Activated naive CD4-positive, alpha-beta T cell treated with anti-CD3 and anti-CD28 coated beads, Interleukin-2, amount 10 ng/mL, durations not matched to agents 7 days and 5 days (primary cell): ENCODE measurements at regions of chr6 and their contacts with region 1.

Region 1: GRCh38 chr6:42547407-42548329 is 16.2 kb upstream of the UBR2 start:
- DNase-seq: peak; percentile 89
- H3K4me3 Mint-ChIP-seq: peak overlapping the region; percentile 51
- H3K27ac Mint-ChIP-seq: peak overlapping the region; percentile 42
- H3K4me1 Mint-ChIP-seq: peaks cover 15% of the 10 kb centered on the region
- H3K27me3 Mint-ChIP-seq: peaks cover 8% of the 10 kb centered on the region

Region 2: GRCh38 chr6:42260972-42261371 is 286.7 kb before region 1 on chr6:
- CTCF ChIA-PET with region 1: interaction called, 64 read pairs
- DNase-seq: peak; percentile 51
- H3K4me3 Mint-ChIP-seq: no peak overlapping the region
- H3K27ac Mint-ChIP-seq: no peak overlapping the region
- H3K4me1 Mint-ChIP-seq: no peaks in the 10 kb centered on the region
- H3K27me3 Mint-ChIP-seq: no peaks in the 10 kb centered on the region

Region 3: DNA sequence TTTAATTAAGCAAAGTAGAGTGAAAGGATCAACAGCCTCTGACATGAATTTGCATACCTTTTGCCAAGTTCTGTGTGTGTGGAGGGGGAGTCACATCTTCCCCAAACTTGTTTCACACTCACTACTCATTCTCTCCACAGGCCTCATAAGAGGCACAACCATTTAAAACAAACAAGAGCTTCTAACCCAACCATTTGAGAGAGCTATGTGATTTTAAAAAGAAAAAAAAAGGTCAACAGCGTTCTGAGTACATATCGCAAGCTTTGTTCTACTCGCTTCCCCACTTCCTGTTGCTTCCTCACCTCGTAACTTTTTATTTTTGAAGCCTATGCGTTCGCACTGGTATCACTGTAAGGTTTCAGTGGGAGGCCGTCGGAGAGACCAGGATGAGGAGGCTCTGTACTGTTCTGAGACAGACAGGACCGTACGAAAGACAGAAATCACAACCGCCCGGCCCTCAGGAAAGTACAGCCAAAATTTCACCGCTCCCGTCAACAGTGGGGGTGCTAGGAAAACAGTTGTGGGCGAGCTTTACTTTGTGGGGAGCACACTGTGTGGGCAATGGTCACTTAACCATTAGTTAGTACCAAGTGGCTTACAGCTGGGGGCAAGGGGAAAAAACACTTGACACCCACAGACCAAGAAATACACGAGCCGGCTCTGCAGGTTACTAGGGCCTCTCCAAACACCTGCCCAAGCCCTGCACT is 157.3 kb before region 1 on chr6:
- CTCF ChIA-PET with region 1: interaction called, 13 read pairs
- DNase-seq: peak; percentile 71
- H3K4me3 Mint-ChIP-seq: peak overlapping the region; percentile 58
- H3K27ac Mint-ChIP-seq: peak overlapping the region; percentile 99
- H3K4me1 Mint-ChIP-seq: peaks cover 89% of the 10 kb centered on the region
- H3K27me3 Mint-ChIP-seq: no peaks in the 10 kb centered on the region

Region 4: DNA sequence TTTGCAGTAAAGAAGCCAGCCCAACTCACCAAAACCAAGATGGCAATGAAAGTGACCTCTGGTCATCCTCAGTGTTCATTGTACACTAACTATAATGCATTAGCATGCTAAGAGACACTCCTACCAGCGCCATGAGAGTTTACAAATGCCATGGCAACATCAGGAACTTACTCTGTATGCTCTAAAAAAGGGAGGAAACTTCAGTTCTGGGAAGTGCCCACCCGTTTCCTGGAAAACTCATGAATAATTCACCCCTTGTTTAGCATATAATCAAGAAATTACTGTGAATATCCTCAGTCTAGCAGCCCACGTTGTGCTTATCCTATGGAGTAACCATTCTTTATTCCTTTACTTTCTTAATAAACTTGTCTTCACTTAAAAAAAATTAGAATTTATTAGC is 76.5 kb before region 1 on chr6:
- CTCF ChIA-PET with region 1: no interaction called
- DNase-seq: no peak
- H3K4me3 Mint-ChIP-seq: no peak overlapping the region
- H3K27ac Mint-ChIP-seq: no peak overlapping the region
- H3K4me1 Mint-ChIP-seq: no peaks in the 10 kb centered on the region
- H3K27me3 Mint-ChIP-seq: peaks cover 17% of the 10 kb centered on the region

Region 5: DNA sequence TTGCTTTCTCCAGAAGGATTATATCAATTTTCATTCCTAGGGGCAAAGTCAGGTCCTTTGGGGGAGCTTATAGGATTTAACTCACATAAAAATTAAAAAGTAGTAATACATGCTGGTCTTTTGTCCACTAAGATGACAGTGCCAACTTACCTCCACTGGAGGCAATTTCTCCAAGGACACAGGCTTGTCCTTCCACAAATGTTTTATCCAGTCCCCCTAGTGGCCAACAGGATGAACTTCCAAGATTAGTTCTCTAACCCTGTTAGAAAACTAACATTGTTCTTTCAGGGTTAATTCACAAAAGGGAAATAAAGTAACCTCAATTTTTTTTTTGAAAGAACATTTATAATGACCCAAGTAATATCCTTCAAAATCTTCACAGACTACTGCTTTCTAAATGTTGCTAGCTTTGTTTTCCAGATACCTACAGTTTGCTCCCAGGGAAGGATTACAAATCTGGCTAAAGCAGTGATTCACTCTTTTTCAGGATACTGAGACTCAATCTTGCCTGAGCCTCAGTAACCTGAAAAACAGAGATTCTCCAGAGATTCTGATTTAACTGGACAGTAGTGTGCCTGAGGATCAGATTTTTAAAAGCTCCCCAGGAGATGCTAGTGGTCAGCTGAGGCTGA is 15.5 kb before region 1 on chr6:
- CTCF ChIA-PET with region 1: interaction called, 24 read pairs
- DNase-seq: peak; percentile 24
- H3K4me3 Mint-ChIP-seq: no peak overlapping the region
- H3K27ac Mint-ChIP-seq: no peak overlapping the region
- H3K4me1 Mint-ChIP-seq: no peaks in the 10 kb centered on the region
- H3K27me3 Mint-ChIP-seq: peaks cover 7% of the 10 kb centered on the region

Region 6: GRCh38 chr6:43355862-43356590 is 808.4 kb after region 1 on chr6:
- CTCF ChIA-PET with region 1: no interaction called
- DNase-seq: no peak
- H3K4me3 Mint-ChIP-seq: no peak overlapping the region
- H3K27ac Mint-ChIP-seq: no peak overlapping the region
- H3K4me1 Mint-ChIP-seq: no peaks in the 10 kb centered on the region
- H3K27me3 Mint-ChIP-seq: no peaks in the 10 kb centered on the region